K562 (cell line): ENCODE measurements at regions of chr12 and their contacts with region 1.

Region 1: GRCh38 chr12:47270782-47271664 is 191.3 kb upstream of the AMIGO2 start:
- DNase-seq: no peak
- ATAC-seq: 0 out of 3 replicates have a peak, but pooled peaks have one; percentile 8
- H3K4me3 ChIP-seq: no peak overlapping the region
- H3K27ac ChIP-seq: peak overlapping the region; percentile 79
- H3K4me1 ChIP-seq: peaks cover 1 to 36% of the 10 kb centered on the region in 2 experiments; a peak in 3 of 5 replicates
- H3K27me3 ChIP-seq: no peaks in the 10 kb centered on the region
- CTCF ChIP-seq: no peak
- EP300 ChIP-seq: no peak
- POLR2A ChIP-seq: no peak
- RAD21 ChIP-seq: no peak

Region 2: DNA sequence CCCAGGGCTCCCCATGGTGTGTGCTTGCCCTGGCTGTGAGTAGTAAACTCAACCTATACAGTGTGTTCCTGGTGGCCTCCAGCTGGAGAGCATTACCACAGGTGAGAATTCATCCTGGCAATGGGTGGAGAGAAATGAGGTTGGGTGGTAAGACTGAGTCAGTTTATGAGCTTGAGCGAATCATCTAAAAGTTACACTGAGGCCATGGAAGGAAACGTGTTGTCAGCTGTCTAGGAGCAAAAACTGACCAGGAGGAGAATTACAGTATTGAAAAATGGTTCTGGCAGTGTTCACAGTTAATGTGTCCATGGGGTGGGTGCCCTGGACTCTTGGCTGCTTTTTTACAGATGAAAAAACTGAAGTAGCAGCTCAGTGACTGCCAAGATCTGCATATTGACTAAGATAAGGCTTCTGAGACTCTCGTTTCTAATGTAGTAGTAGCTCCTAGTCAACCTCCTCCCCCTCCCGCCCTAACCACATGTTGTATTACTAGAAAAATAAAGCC is 10.7 kb after region 1 on chr12:
- CTCF ChIA-PET with region 1: no interaction called
- POLR2A ChIA-PET with region 1: interaction called, 11 read pairs
- in situ Hi-C with region 1: no loop called
- intact Hi-C with region 1: no loop called
- DNase-seq: peak; percentile 35 to 73 (median 56)
- ATAC-seq: peak; percentile 66
- H3K4me3 ChIP-seq: no peak overlapping the region
- H3K27ac ChIP-seq: peak overlapping the region; percentile 60
- H3K4me1 ChIP-seq: peaks cover 17 to 44% of the 10 kb centered on the region in 2 experiments
- H3K27me3 ChIP-seq: no peaks in the 10 kb centered on the region
- CTCF ChIP-seq: no peak
- EP300 ChIP-seq: no peak
- POLR2A ChIP-seq: no peak
- RAD21 ChIP-seq: 0 out of 4 replicates have a peak, but pooled peaks of 1 of the 2 experiments have one; percentile 2